ENCODE measurements at regions of chr16 and their contacts with region 1.

Region 1: DNA sequence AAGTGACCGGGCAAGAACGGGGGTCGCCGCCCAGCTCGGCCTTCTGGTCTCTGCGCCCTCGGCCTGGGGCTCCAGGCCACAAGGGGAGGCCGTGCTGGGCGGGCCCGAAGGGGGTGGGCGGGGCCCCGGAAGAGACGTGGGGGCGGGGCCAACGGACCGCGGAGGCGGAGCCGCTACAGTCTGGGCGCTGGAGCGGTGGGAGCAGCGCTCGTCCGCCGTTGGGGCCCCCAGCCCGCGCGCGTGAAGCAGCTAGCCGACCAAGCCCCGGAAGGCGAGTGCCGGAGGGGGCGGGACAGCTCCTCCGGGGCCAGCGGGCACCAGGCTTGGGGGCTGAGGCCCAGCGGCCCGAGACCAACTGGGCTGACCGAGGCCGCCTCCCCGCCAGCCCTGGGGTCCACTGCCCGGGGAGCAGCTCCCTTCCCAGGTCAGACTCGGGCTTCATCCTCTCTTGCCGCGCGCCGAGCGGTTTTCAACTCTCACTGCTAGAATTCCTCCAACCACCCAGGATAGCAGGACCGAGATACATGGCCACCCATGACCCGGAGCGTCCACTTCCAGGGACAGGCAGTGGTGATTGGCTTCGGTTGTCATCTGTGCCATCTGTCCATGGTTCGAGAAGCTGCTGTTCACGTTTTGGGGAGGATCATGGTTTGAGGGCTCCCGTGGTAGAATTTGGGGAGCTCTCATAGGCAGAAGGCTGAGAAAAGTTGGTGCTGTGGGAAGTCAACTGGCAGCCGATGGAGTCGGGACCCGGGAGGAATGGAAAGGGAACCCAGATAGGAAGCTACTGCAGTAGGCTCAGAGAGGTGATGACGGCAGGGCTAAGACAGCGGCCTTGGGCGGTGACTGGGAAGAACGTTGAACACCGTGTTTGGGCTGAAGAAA is 44.6 kb upstream of the LCMT1 start:
- DNase-seq: no peak
- H3K4me3 ChIP-seq: peak overlapping the region; percentile 84
- H3K27ac ChIP-seq: peak overlapping the region; percentile 80
- H3K27me3 ChIP-seq: no peaks in the 10 kb centered on the region
- CTCF ChIP-seq: no peak

Region 2: GRCh38 chr16:25111403-25112166 is 44.6 kb after region 1 on chr16 and contains the start of gene LCMT1:
- CTCF ChIA-PET with region 1: no interaction called
- POLR2A ChIA-PET with region 1: interaction called, 11 read pairs
- DNase-seq: peak; percentile 91
- H3K4me3 ChIP-seq: peak within 1 kb of the TSS; percentile 98
- H3K27ac ChIP-seq: peak within 1 kb of the TSS; percentile 73
- H3K27me3 ChIP-seq: no peaks in the 10 kb centered on the region
- CTCF ChIP-seq: no peak; the same call in 1 of the 2 replicates
- polyA plus RNA-seq, gene LCMT1: 41.7 and 46.9 TPM in 2 replicates